CD4-positive, alpha-beta memory T cell (primary cell): ENCODE measurements at regions of chrX and their contacts with region 1.

Region 1: GRCh38 chrX:135521405-135522189 is 1.1 kb downstream of the INTS6L start:
- DNase-seq: peak; percentile 80 to 94 (median 86)
- H3K4me3 ChIP-seq: peak overlapping the region; percentile 57 to 75
- H3K4me3 Mint-ChIP-seq: peak overlapping the region; percentile 91 to 99 (median 96)
- H3K27ac ChIP-seq: peak overlapping the region; percentile 83
- H3K27ac Mint-ChIP-seq: peak overlapping the region; percentile 90 to 100 (median 98)
- H3K4me1 ChIP-seq: peaks cover 39% of the 10 kb centered on the region
- H3K4me1 Mint-ChIP-seq: peaks cover 26 to 56% (median 36%) of the 10 kb centered on the region in 4 donors
- H3K27me3 ChIP-seq: no peaks in the 10 kb centered on the region
- H3K27me3 Mint-ChIP-seq: peaks cover 0 to 2% of the 10 kb centered on the region in 2 donors

Region 2: GRCh38 chrX:135003876-135004623 is 517.5 kb before region 1 on chrX:
- CTCF ChIA-PET with region 1: no interaction called
- POLR2A ChIA-PET with region 1: no interaction called
- intact Hi-C with region 1: loop called (anchors 2 kb)
- DNase-seq: peak; percentile 87 to 88 (median 88)
- H3K4me3 ChIP-seq: peak overlapping the region; percentile 23 to 62
- H3K4me3 Mint-ChIP-seq: peak overlapping the region; percentile 86 to 91 (median 88)
- H3K27ac ChIP-seq: no peak overlapping the region
- H3K27ac Mint-ChIP-seq: peak overlapping the region; percentile 65 to 95 (median 73)
- H3K4me1 ChIP-seq: peaks cover 7% of the 10 kb centered on the region
- H3K4me1 Mint-ChIP-seq: peaks cover 5 to 13% (median 10%) of the 10 kb centered on the region in 4 donors
- H3K27me3 ChIP-seq: no peaks in the 10 kb centered on the region
- H3K27me3 Mint-ChIP-seq: no peaks in the 10 kb centered on the region

Region 3: GRCh38 chrX:135295238-135295943 is 226.2 kb before region 1 on chrX:
- CTCF ChIA-PET with region 1: no interaction called
- POLR2A ChIA-PET with region 1: no interaction called
- intact Hi-C with region 1: no loop called
- DNase-seq: peak; percentile 51 to 71 (median 63)
- H3K4me3 ChIP-seq: peak overlapping the region; percentile 29 to 57
- H3K4me3 Mint-ChIP-seq: peak overlapping the region; percentile 91 to 95 (median 93)
- H3K27ac ChIP-seq: peak overlapping the region; percentile 44
- H3K27ac Mint-ChIP-seq: peak overlapping the region; percentile 86 to 96 (median 91)
- H3K4me1 ChIP-seq: peaks cover 20% of the 10 kb centered on the region
- H3K4me1 Mint-ChIP-seq: peaks cover 10 to 20% (median 13%) of the 10 kb centered on the region in 4 donors
- H3K27me3 ChIP-seq: no peaks in the 10 kb centered on the region
- H3K27me3 Mint-ChIP-seq: no peaks in the 10 kb centered on the region

Region 4: DNA sequence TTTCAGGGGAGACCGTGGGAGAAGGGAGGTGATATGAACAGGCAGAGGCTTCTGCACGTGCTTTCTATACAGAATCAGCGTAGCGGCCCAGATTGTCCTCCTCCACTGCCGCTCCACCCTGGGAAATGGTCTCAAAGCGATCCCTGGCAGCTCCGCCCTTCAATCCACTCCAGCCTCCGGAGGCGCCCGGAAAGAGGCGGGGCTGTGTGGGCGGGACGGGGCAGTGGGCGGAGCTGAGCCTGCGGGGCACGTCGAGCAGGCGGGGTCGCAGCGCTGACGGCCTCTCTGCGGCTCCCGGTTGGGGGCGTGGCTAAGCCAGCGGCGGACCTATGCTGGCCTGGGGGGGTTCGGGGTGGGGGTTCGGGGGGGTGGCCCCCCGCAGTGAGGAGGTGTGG is 100.1 kb before region 1 on chrX:
- CTCF ChIA-PET with region 1: no interaction called
- POLR2A ChIA-PET with region 1: no interaction called
- intact Hi-C with region 1: loop called (anchors 1 kb)
- DNase-seq: peak; percentile 81 to 86 (median 82)
- H3K4me3 ChIP-seq: peak overlapping the region in 1 of 2 donors; percentile 28
- H3K4me3 Mint-ChIP-seq: peak overlapping the region; percentile 30 to 84 (median 74)
- H3K27ac ChIP-seq: no peak overlapping the region
- H3K27ac Mint-ChIP-seq: peak overlapping the region in 2 of 7 donors; percentile 3 to 51
- H3K4me1 ChIP-seq: peaks cover 5% of the 10 kb centered on the region
- H3K4me1 Mint-ChIP-seq: peaks cover 5 to 13% (median 6%) of the 10 kb centered on the region in 4 donors
- H3K27me3 ChIP-seq: no peaks in the 10 kb centered on the region
- H3K27me3 Mint-ChIP-seq: no peaks in the 10 kb centered on the region

Region 5: DNA sequence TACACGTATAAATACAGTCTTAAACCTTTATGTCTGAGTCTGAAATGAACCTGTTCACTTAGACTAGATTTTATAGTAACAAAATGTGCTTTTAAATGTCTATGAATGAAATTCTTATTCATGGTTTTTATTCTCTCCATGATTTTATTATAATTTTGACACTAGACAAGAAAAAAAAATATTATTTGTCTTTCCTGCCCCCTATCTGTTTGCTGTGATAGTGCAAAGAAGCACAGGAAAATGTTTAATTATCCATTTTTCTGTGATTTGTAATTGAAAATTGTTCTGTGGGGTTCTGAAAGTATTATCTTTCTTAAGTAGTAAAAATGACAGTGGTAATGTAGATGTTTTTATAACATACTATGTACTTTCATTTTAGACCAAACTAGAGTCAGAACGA is 50.8 kb after region 1 on chrX:
- CTCF ChIA-PET with region 1: interaction called, 8 read pairs
- POLR2A ChIA-PET with region 1: no interaction called
- intact Hi-C with region 1: loop called (anchors 10 kb)
- DNase-seq: peak in 1 of 5 donors; percentile 3
- H3K4me3 ChIP-seq: no peak overlapping the region
- H3K4me3 Mint-ChIP-seq: no peak overlapping the region
- H3K27ac ChIP-seq: no peak overlapping the region
- H3K27ac Mint-ChIP-seq: peak overlapping the region in 1 of 7 donors; percentile 23
- H3K4me1 ChIP-seq: no peaks in the 10 kb centered on the region
- H3K4me1 Mint-ChIP-seq: no peaks in the 10 kb centered on the region
- H3K27me3 ChIP-seq: no peaks in the 10 kb centered on the region
- H3K27me3 Mint-ChIP-seq: no peaks in the 10 kb centered on the region

Region 6: GRCh38 chrX:136047969-136048368 is 526.4 kb after region 1 on chrX:
- CTCF ChIA-PET with region 1: no interaction called
- POLR2A ChIA-PET with region 1: no interaction called
- intact Hi-C with region 1: no loop called
- DNase-seq: no peak
- H3K4me3 ChIP-seq: no peak overlapping the region
- H3K4me3 Mint-ChIP-seq: no peak overlapping the region
- H3K27ac ChIP-seq: no peak overlapping the region
- H3K27ac Mint-ChIP-seq: no peak overlapping the region
- H3K4me1 ChIP-seq: no peaks in the 10 kb centered on the region
- H3K4me1 Mint-ChIP-seq: no peaks in the 10 kb centered on the region
- H3K27me3 ChIP-seq: no peaks in the 10 kb centered on the region
- H3K27me3 Mint-ChIP-seq: no peaks in the 10 kb centered on the region

Region 7: GRCh38 chrX:136496770-136497598 is 975.4 kb after region 1 on chrX and contains the start of gene HTATSF1:
- CTCF ChIA-PET with region 1: no interaction called
- POLR2A ChIA-PET with region 1: interaction called, 3 read pairs
- intact Hi-C with region 1: loop called (anchors 2 kb)
- DNase-seq: peak; percentile 88 to 94 (median 91)
- H3K4me3 ChIP-seq: peak within 1 kb of the TSS; percentile 83
- H3K4me3 Mint-ChIP-seq: peak within 1 kb of the TSS; percentile 88 to 95 (median 91)
- H3K27ac ChIP-seq: peak within 1 kb of the TSS; percentile 73
- H3K27ac Mint-ChIP-seq: peak within 1 kb of the TSS; percentile 93 to 99 (median 98)
- H3K4me1 ChIP-seq: peaks cover 23% of the 10 kb centered on the region
- H3K4me1 Mint-ChIP-seq: peaks cover 6 to 31% (median 17%) of the 10 kb centered on the region in 4 donors
- H3K27me3 ChIP-seq: no peaks in the 10 kb centered on the region
- H3K27me3 Mint-ChIP-seq: peaks cover 0 to 1% of the 10 kb centered on the region in 2 donors
- total RNA-seq, gene HTATSF1: 31.6 to 34.7 TPM